ENCODE measurements at regions of chr3 and their contacts with region 1.

Region 1: GRCh38 chr3:189927975-189928895 is 192.5 kb downstream of the P3H2 start:
- DNase-seq: peak; percentile 29 to 45
- H3K4me3 ChIP-seq: no peak overlapping the region
- H3K27ac ChIP-seq: peak overlapping the region; percentile 3; the same call in 1 of the 2 replicates
- H3K4me1 ChIP-seq: peaks cover 5% of the 10 kb centered on the region
- H3K27me3 ChIP-seq: no peaks in the 10 kb centered on the region
- CTCF ChIP-seq: no peak

Region 2: DNA sequence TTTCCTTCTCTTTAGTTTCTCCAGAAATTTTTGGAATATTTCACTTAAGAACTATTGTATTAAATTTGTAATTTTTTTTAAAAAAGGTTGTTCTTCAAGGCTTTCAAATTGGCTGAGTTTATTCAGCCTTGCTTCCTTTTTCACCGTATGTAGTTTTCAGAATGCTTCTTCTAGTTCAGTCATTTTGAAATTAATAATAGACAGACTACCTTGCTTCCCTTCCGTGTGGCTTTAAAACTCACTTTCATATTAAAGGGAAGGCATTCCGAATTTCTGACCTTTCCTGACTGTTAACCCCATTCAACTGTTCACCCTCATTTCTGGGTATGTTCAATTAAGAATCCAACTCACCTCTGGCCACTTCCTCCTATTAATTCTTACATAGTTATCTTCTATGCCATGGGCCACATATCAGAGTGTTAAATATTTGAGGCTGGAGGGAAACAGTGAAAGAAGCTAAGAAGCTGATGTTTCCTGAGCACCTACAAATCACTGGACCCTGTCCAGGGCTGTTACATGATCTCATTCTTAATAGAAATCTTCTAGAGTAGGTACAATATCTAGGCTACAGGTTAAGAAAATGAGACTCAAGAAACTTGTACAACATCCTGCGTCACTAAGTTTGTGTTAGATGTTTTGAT is 45.0 kb before region 1 on chr3:
- CTCF ChIA-PET with region 1: no interaction called
- POLR2A ChIA-PET with region 1: no interaction called
- intact Hi-C with region 1: no loop called
- DNase-seq: no peak
- H3K4me3 ChIP-seq: no peak overlapping the region
- H3K27ac ChIP-seq: no peak overlapping the region
- H3K4me1 ChIP-seq: no peaks in the 10 kb centered on the region
- H3K27me3 ChIP-seq: no peaks in the 10 kb centered on the region
- CTCF ChIP-seq: no peak

Region 3: GRCh38 chr3:189908646-189909045 is 19.6 kb before region 1 on chr3:
- CTCF ChIA-PET with region 1: no interaction called
- POLR2A ChIA-PET with region 1: interaction called, 12 read pairs
- intact Hi-C with region 1: no loop called
- DNase-seq: peak; percentile 47 to 77
- H3K4me3 ChIP-seq: peak overlapping the region; percentile 7; the same call in 1 of the 2 replicates
- H3K27ac ChIP-seq: peak overlapping the region; percentile 98
- H3K4me1 ChIP-seq: peaks cover 45% of the 10 kb centered on the region
- H3K27me3 ChIP-seq: no peaks in the 10 kb centered on the region
- CTCF ChIP-seq: no peak

Region 4: GRCh38 chr3:190192739-190193138 is 264.5 kb after region 1 on chr3:
- CTCF ChIA-PET with region 1: no interaction called
- POLR2A ChIA-PET with region 1: no interaction called
- intact Hi-C with region 1: no loop called
- DNase-seq: no peak
- H3K4me3 ChIP-seq: no peak overlapping the region
- H3K27ac ChIP-seq: no peak overlapping the region
- H3K4me1 ChIP-seq: no peaks in the 10 kb centered on the region
- H3K27me3 ChIP-seq: no peaks in the 10 kb centered on the region
- CTCF ChIP-seq: no peak

Measured in PC-9 (cell line).